Psoas muscle (tissue), 8 donors: ENCODE measurements at regions of chr2 and their contacts with region 1.

Region 1: DNA sequence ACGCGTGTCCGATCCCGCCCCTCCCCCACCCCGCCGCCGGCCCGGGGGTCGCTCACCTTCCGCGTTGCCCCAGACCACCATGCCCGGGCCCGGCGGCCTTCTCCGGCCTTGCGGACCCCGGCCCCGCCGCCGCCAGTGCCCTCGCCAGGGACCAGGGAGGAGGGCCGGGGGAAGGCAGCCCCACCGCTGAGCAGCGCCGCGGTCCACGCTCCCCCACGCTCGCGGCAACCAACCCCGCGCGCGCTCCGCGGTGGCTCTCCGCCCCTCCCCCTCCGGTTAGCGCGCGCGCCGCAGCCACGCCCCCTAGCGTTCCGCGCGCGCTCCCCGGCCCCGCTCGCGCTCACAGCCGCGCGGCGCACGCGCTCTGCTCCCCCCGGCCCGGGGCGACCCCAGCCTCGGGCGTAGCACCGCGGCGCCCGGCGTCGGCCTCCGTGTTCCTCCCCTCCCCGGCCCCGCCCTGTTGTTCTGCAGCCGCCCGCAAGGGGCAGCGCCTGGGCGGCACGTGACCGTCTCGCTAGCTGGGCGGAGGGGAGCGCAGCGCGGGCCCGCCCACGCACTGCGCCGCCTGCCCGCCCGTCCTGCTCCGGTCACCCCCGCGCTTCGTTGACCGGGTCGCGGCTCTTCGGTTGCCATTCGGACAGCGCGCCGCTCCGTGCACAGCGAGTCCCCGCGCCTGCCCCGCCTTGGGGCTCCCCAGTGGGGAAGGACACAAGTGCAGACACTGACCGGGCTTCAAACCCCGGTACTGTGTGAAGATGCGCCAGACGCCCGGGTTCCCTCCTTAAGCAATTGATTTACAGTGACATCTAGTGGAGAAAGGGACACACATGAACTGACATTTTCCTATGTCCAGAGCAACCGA is at the start of gene REV1:
- DNase-seq: peak; percentile 94 to 96
- ATAC-seq: peak; percentile 94 to 96 (median 96)
- H3K4me3 ChIP-seq: peak within 1 kb of the TSS; percentile 90
- H3K27ac ChIP-seq: peak within 1 kb of the TSS; percentile 97
- H3K4me1 ChIP-seq: peaks cover 34% of the 10 kb centered on the region
- H3K27me3 ChIP-seq: no peaks in the 10 kb centered on the region
- CTCF ChIP-seq: peak; percentile 64
- total RNA-seq, gene REV1: 19.9 to 26.0 (median 24.7) TPM

Region 2: DNA sequence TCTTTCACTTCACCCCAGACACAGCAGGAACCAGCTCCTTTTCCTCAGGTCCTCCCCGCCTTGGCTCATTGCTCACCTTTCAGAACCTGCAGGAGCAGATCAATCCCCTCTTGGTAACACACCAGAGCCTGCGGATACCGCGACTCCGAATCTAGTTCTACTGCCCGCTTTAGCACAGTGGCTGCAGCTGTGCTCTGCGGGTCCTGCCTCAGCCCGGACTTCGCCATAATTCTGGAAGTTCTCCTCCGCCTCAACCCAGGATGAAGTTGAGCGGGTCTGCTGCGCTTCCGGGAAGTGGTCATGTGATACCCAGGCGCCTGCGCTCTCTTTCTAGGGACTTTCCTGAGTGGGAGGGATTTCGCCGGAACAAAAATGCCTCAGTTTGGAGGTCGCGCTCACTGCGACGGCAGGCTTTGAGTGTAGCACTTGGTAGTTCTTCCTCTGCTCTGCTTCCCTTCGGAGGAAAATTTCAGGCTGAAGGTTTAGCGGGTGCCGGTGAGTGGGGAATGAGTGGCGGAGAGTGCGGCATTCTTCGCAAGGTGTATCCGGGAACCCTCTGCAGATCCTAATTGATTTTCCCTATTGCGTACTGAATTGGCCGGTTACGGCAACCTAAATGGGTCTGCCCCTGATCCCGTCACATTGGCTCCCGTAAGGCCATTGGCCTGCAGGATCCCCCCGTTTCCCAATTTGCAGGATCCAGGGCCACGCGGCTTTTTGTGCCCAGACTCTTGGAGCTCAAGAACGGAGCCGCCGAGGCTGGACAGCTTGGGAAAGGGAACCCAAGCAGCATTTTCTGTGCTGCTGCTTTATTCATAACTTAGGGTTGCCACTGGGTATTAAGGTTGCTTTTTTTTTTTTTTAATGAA is 309.0 kb before region 1 on chr2 and contains the starts of genes MITD1 and MRPL30:
- intact Hi-C with region 1: loop called in 1 of 2 experiments (anchors 5 kb)
- DNase-seq: peak; percentile 89 to 93
- ATAC-seq: peak; percentile 96 to 98 (median 98)
- H3K4me3 ChIP-seq: peak within 1 kb of the TSS; percentile 88
- H3K27ac ChIP-seq: peak within 1 kb of the TSS; percentile 71
- H3K4me1 ChIP-seq: peaks cover 31% of the 10 kb centered on the region
- H3K27me3 ChIP-seq: no peaks in the 10 kb centered on the region
- CTCF ChIP-seq: no peak
- total RNA-seq, gene MITD1: 6.8 to 10.5 (median 8.6) TPM
- total RNA-seq, gene MRPL30: 31.9 to 37.8 (median 36.7) TPM

Region 3: GRCh38 chr2:99297994-99298393 is 192.0 kb before region 1 on chr2:
- intact Hi-C with region 1: no loop called
- DNase-seq: no peak
- ATAC-seq: peak in 2 of 4 donors; percentile 37 to 50
- H3K4me3 ChIP-seq: no peak overlapping the region
- H3K27ac ChIP-seq: no peak overlapping the region
- H3K4me1 ChIP-seq: no peaks in the 10 kb centered on the region
- H3K27me3 ChIP-seq: no peaks in the 10 kb centered on the region
- CTCF ChIP-seq: no peak

Region 4: DNA sequence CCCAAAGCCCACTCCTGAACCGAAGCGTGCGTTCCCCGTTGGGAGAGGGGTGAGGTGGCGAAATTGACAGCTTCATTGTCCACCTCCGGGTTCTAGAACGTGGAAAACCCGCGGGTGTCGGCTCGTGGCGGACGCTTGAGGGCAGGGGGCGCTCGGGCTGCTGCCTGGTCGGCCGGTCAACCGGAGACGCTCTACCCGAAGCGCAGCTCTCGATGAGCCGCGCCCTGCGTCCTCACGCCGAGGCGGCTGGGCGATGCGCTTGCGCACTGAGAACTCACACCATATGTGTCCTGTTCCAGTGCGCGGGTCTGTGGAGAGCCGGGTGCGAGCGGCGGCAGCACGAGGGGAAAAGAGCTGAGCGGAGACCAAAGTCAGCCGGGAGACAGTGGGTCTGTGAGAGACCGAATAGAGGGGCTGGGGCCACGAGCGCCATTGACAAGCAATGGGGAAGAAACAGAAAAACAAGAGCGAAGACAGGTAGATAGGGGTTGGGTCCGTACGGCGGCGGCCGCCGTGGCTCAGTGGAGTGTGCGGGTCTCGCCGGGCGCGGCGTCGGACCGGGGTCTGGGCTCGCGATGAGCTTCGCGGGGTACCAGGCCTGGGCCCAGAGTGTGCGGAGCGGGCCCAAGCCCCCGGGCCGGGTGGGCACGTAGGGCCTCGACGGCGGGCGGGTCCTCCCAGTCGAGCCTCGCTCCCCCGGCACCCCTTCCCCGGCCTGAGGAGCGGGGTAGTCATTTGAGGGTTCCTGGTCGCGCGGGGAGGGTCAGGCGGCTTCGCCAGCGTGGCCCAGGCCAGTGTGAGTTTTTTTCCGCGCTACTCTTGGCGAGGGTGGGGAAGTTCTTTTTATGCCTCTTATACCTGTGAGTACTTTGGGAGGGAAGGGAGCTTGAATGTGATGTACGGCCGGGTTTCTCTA is 152.6 kb before region 1 on chr2 and contains the start of gene EIF5B:
- intact Hi-C with region 1: loop called (anchors 1 to 5 kb)
- DNase-seq: peak; percentile 97 to 99
- ATAC-seq: peak; percentile 88 to 91 (median 89)
- H3K4me3 ChIP-seq: peak within 1 kb of the TSS; percentile 95
- H3K27ac ChIP-seq: peak within 1 kb of the TSS; percentile 97
- H3K4me1 ChIP-seq: peaks cover 50% of the 10 kb centered on the region
- H3K27me3 ChIP-seq: no peaks in the 10 kb centered on the region
- CTCF ChIP-seq: peak; percentile 59
- total RNA-seq, gene EIF5B: 54.2 to 94.3 (median 75.2) TPM

Region 5: DNA sequence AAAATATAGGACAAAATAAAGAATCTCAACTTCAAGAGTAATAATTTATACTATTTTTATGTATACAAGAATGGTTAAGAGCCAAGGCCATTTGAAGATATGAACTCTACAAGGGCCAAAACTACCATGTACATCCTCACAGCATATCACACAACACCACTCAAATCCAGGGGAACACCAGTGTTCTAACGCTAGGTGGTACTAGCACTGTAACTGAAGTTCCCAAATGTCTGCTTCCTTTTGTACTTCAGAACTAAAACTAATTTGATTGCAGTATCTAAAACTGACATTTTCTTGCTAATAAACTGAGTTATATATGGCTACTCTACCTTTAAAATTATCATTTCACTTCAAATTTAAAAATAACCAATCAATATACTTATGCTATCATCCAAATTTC is 47.2 kb before region 1 on chr2:
- intact Hi-C with region 1: loop called in 1 of 2 experiments (anchors 5 kb)
- DNase-seq: no peak
- ATAC-seq: peak in 1 of 4 donors; percentile 58
- H3K4me3 ChIP-seq: no peak overlapping the region
- H3K27ac ChIP-seq: no peak overlapping the region
- H3K4me1 ChIP-seq: peaks cover 5% of the 10 kb centered on the region
- H3K27me3 ChIP-seq: no peaks in the 10 kb centered on the region
- CTCF ChIP-seq: peak; percentile 10